ENCODE measurements at regions of chr20 and their contacts with region 1.

Region 1: GRCh38 chr20:36861875-36862801 is 13.8 kb upstream of the TLDC2 start:
- DNase-seq: peak; percentile 95
- ATAC-seq: peak; percentile 59
- H3K4me3 ChIP-seq: peak overlapping the region; percentile 81
- H3K27ac ChIP-seq: peak overlapping the region; percentile 47
- H3K4me1 ChIP-seq: peaks cover 22% of the 10 kb centered on the region
- H3K27me3 ChIP-seq: no peaks in the 10 kb centered on the region
- CTCF ChIP-seq: no peak

Region 2: DNA sequence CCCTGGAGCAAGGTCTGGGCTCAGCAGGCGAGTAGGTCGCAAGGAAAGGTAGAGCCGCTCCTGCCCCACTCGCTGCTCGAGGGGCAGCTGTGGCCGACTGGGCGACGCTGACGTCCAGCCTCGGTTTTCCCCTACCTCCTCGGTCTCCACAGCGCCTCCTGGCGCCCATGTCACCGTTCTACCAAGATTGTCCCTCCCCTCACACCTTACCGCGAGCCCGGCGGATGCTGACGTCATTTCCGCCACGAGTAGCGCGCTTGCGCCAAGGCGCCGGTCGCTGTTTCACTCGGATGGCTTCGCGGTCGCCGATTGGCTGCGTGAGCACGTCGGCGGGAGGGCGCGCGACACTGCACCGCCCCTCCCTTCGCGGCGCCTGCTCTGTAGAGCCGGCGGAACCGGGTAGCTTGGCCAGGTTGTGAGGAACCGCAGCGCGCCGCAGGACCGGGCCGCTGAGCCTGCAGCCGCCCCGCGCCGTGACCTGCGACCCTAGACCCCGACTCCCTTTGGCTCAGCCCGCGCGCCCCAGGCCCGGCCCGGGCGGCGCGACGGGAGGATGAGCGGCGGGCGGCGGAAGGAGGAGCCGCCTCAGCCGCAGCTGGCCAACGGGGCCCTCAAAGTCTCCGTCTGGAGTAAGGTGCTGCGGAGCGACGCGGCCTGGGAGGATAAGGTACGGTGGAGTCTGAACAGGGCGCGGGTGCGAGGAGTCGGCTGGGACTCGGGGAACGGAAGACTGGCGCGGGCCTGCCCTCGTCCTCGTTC is 256.6 kb before region 1 on chr20 and contains the start of gene RAB5IF:
- CTCF ChIA-PET with region 1: no interaction called
- POLR2A ChIA-PET with region 1: no interaction called
- intact Hi-C with region 1: loop called (anchors 10 kb)
- DNase-seq: peak; percentile 100
- ATAC-seq: peak; percentile 97
- H3K4me3 ChIP-seq: peak within 1 kb of the TSS; percentile 96
- H3K27ac ChIP-seq: peak within 1 kb of the TSS; percentile 38
- H3K4me1 ChIP-seq: peaks cover 17% of the 10 kb centered on the region
- H3K27me3 ChIP-seq: no peaks in the 10 kb centered on the region
- CTCF ChIP-seq: peak; percentile 90
- total RNA-seq, gene RAB5IF: 217 and 255 TPM in 2 replicates

Region 3: GRCh38 chr20:36666181-36666740 is 195.9 kb before region 1 on chr20:
- CTCF ChIA-PET with region 1: no interaction called
- POLR2A ChIA-PET with region 1: no interaction called
- intact Hi-C with region 1: no loop called
- DNase-seq: peak; percentile 15
- ATAC-seq: peak; percentile 40; the same call in 1 of the 2 replicates
- H3K4me3 ChIP-seq: no peak overlapping the region
- H3K27ac ChIP-seq: no peak overlapping the region
- H3K4me1 ChIP-seq: no peaks in the 10 kb centered on the region
- H3K27me3 ChIP-seq: no peaks in the 10 kb centered on the region
- CTCF ChIP-seq: no peak; the same call in 1 of the 2 replicates

Region 4: GRCh38 chr20:36825385-36826104 is 36.6 kb before region 1 on chr20:
- CTCF ChIA-PET with region 1: no interaction called
- POLR2A ChIA-PET with region 1: interaction called, 11 read pairs
- intact Hi-C with region 1: no loop called
- DNase-seq: no peak
- ATAC-seq: no peak
- H3K4me3 ChIP-seq: no peak overlapping the region
- H3K27ac ChIP-seq: no peak overlapping the region
- H3K4me1 ChIP-seq: no peaks in the 10 kb centered on the region
- H3K27me3 ChIP-seq: no peaks in the 10 kb centered on the region
- CTCF ChIP-seq: no peak

Region 5: DNA sequence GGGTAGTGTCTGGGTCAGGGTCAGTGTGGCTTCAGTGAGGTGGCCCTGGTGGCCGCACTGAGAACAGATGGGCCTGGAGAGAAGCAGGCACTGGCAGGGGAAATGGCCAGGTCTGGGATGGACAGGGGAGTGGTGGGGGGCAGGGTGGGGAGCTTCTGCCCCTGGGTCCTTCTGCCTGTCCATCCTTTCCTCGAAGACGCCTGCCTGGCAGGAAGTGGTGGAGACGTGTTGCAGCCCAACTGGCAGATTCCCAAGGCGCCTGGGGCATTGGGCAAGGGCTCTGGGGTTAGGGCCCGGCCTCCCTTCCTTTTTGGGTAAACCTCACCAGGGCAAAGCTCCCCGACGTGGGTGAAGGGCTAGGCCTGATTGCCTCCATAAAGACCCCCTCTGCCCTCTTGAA is 494.2 kb after region 1 on chr20:
- CTCF ChIA-PET with region 1: no interaction called
- POLR2A ChIA-PET with region 1: no interaction called
- intact Hi-C with region 1: no loop called
- DNase-seq: peak; percentile 53
- ATAC-seq: no peak
- H3K4me3 ChIP-seq: no peak overlapping the region
- H3K27ac ChIP-seq: no peak overlapping the region
- H3K4me1 ChIP-seq: peaks cover 36% of the 10 kb centered on the region
- H3K27me3 ChIP-seq: no peaks in the 10 kb centered on the region
- CTCF ChIP-seq: no peak; the same call in 1 of the 2 replicates

Region 6: GRCh38 chr20:37406010-37406998 is 544.2 kb after region 1 on chr20:
- CTCF ChIA-PET with region 1: no interaction called
- POLR2A ChIA-PET with region 1: no interaction called
- intact Hi-C with region 1: no loop called
- DNase-seq: peak; percentile 64
- ATAC-seq: peak; percentile 73
- H3K4me3 ChIP-seq: peak overlapping the region; percentile 59
- H3K27ac ChIP-seq: no peak overlapping the region
- H3K4me1 ChIP-seq: peaks cover 16% of the 10 kb centered on the region
- H3K27me3 ChIP-seq: no peaks in the 10 kb centered on the region
- CTCF ChIP-seq: no peak

Measured in PC-3 (cell line).